ENCODE measurements at regions of chr15 and their contacts with region 1.

Region 1: DNA sequence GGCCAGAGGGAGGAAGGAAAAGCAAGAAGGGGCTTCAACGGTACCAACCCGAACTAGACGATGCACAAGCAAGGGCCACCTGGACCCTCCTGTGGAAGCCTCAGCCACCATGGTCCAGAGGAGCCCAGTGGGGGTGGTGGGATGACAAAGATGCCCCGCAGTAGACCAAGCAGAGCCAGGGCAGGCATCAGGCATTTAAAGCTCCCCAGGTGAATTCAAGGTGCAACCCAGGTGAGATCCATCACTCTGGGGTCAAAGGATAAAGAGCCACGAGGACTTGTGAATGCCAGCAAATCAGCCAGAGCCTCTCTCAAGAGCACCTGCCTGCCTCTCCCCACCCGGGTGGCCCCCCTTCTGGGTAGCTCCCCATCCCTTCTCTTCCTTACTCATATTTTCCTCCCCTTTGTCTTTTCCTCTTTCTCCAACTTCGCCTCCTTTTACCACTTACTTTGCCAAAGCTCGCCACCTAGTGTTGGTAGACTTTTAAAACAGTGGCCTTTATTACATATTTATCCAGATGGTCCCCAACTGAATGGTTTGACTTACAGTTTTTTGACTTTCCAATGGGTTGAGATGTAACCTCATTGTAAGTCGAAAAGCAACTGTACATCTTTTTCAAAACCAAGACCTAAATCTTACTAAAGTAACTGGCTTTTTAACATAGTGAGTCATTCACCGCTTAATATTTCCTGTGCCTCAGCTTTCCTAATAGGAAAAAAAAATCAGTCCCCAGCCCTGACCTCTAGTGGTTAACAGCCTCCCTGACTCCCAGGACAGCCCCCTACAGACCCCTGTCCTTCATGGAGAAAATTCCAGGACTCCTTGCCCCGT is 18.8 kb downstream of the PLA2G4F start:
- DNase-seq: peak; percentile 81
- ATAC-seq: peak; percentile 50
- H3K4me3 ChIP-seq: no peak overlapping the region
- H3K27ac ChIP-seq: no peak overlapping the region
- H3K4me1 ChIP-seq: peaks cover 17% of the 10 kb centered on the region
- H3K27me3 ChIP-seq: no peaks in the 10 kb centered on the region
- CTCF ChIP-seq: peak; percentile 88

Region 2: DNA sequence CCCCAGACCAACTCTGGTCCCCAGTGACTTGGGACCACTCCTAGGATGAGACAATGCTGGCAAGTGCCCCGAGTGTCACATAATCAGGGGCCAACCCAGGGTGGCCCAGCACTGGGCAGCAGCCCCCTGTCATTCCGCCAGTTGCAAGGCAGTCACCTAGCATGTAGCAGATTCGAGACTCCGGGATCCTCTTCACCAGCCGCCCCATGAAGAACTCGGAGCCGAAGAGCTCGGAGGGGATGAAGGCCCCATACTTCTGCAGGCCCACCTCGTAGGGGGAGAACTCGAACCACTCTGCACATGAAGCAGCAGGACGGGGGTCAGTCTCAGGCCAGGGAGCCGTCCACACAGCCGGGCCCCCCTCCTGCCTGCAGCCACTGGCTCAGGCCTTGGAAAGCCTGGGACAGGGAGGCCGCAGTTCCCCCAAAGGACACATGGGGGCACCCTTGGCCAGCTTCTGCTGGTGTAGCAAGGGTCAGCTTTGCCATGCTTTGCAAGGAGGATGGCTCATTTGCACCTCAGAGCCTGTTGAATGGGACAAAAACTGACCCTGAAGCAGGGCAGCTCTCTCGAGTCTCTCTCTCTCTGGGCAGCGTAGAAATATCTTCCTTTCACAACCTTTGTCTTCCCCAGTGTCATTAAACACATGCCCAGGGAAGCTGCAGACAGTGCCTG is 148.2 kb before region 1 on chr15:
- CTCF ChIA-PET with region 1: interaction called, 3 read pairs
- POLR2A ChIA-PET with region 1: no interaction called
- intact Hi-C with region 1: loop called (anchors 1 kb)
- DNase-seq: peak; percentile 91
- ATAC-seq: peak; percentile 98
- H3K4me3 ChIP-seq: no peak overlapping the region
- H3K27ac ChIP-seq: no peak overlapping the region
- H3K4me1 ChIP-seq: no peaks in the 10 kb centered on the region
- H3K27me3 ChIP-seq: no peaks in the 10 kb centered on the region
- CTCF ChIP-seq: peak; percentile 97

Region 3: GRCh38 chr15:42084460-42085235 is 53.0 kb before region 1 on chr15:
- CTCF ChIA-PET with region 1: interaction called, 19 read pairs
- POLR2A ChIA-PET with region 1: no interaction called
- intact Hi-C with region 1: loop called (anchors 1 kb)
- DNase-seq: peak; percentile 95
- ATAC-seq: peak; percentile 91
- H3K4me3 ChIP-seq: peak overlapping the region; percentile 46
- H3K27ac ChIP-seq: peak overlapping the region; percentile 89
- H3K4me1 ChIP-seq: peaks cover 32% of the 10 kb centered on the region
- H3K27me3 ChIP-seq: no peaks in the 10 kb centered on the region
- CTCF ChIP-seq: peak; percentile 95

Region 4: GRCh38 chr15:42273102-42273899 is 135.7 kb after region 1 on chr15 and contains the starts of genes GANC and TMEM87A:
- CTCF ChIA-PET with region 1: no interaction called
- POLR2A ChIA-PET with region 1: no interaction called
- intact Hi-C with region 1: no loop called
- DNase-seq: peak; percentile 99
- ATAC-seq: peak; percentile 82
- H3K4me3 ChIP-seq: peak within 1 kb of the TSS; percentile 77
- H3K27ac ChIP-seq: peak within 1 kb of the TSS; percentile 94
- H3K4me1 ChIP-seq: peaks cover 41% of the 10 kb centered on the region
- H3K27me3 ChIP-seq: no peaks in the 10 kb centered on the region
- CTCF ChIP-seq: no peak
- total RNA-seq, gene GANC: 8.2 and 12.4 TPM in 2 replicates
- total RNA-seq, gene TMEM87A: 55.8 and 56.3 TPM in 2 replicates

Measured in PC-3 (cell line).